Caco-2 (cell line): ENCODE measurements at regions of chr12 and their contacts with region 1.

Region 1: GRCh38 chr12:28172434-28173030 is 17.7 kb upstream of the CCDC91 start:
- DNase-seq: peak in 1 of 2 experiments; percentile 59
- H3K4me3 ChIP-seq: no peak overlapping the region
- H3K4me3 Mint-ChIP-seq: no peak overlapping the region
- H3K27ac Mint-ChIP-seq: no peak overlapping the region
- H3K4me1 ChIP-seq: no peaks in the 10 kb centered on the region
- H3K4me1 Mint-ChIP-seq: no peaks in the 10 kb centered on the region
- H3K27me3 ChIP-seq: no peaks in the 10 kb centered on the region
- H3K27me3 Mint-ChIP-seq: peaks cover 6% of the 10 kb centered on the region
- CTCF ChIP-seq: peak; percentile 62 to 84

Region 2: GRCh38 chr12:27922501-27923139 is 249.9 kb before region 1 on chr12:
- CTCF ChIA-PET with region 1: no interaction called
- POLR2A ChIA-PET with region 1: no interaction called
- intact Hi-C with region 1: no loop called
- DNase-seq: no peak
- H3K4me3 ChIP-seq: no peak overlapping the region
- H3K4me3 Mint-ChIP-seq: no peak overlapping the region
- H3K27ac Mint-ChIP-seq: no peak overlapping the region
- H3K4me1 ChIP-seq: peaks cover 11% of the 10 kb centered on the region
- H3K4me1 Mint-ChIP-seq: peaks cover 18% of the 10 kb centered on the region
- H3K27me3 ChIP-seq: no peaks in the 10 kb centered on the region
- H3K27me3 Mint-ChIP-seq: no peaks in the 10 kb centered on the region
- CTCF ChIP-seq: no peak

Region 3: GRCh38 chr12:27969624-27970400 is 202.7 kb before region 1 on chr12:
- CTCF ChIA-PET with region 1: no interaction called
- POLR2A ChIA-PET with region 1: no interaction called
- intact Hi-C with region 1: loop called (anchors 1 kb)
- DNase-seq: peak; percentile 82 to 86
- H3K4me3 ChIP-seq: peak overlapping the region; percentile 51
- H3K4me3 Mint-ChIP-seq: peak overlapping the region; percentile 78
- H3K27ac Mint-ChIP-seq: no peak overlapping the region
- H3K4me1 ChIP-seq: peaks cover 31% of the 10 kb centered on the region
- H3K4me1 Mint-ChIP-seq: peaks cover 32% of the 10 kb centered on the region
- H3K27me3 ChIP-seq: peaks cover 3% of the 10 kb centered on the region; the same call in 1 of the 2 replicates
- H3K27me3 Mint-ChIP-seq: peaks cover 31% of the 10 kb centered on the region
- CTCF ChIP-seq: peak in 1 of 2 experiments; percentile 50

Region 4: GRCh38 chr12:28040246-28040645 is 132.3 kb before region 1 on chr12:
- CTCF ChIA-PET with region 1: no interaction called
- POLR2A ChIA-PET with region 1: no interaction called
- intact Hi-C with region 1: no loop called
- DNase-seq: no peak
- H3K4me3 ChIP-seq: no peak overlapping the region
- H3K4me3 Mint-ChIP-seq: no peak overlapping the region
- H3K27ac Mint-ChIP-seq: no peak overlapping the region
- H3K4me1 ChIP-seq: no peaks in the 10 kb centered on the region
- H3K4me1 Mint-ChIP-seq: no peaks in the 10 kb centered on the region
- H3K27me3 ChIP-seq: no peaks in the 10 kb centered on the region
- H3K27me3 Mint-ChIP-seq: no peaks in the 10 kb centered on the region
- CTCF ChIP-seq: no peak

Region 5: DNA sequence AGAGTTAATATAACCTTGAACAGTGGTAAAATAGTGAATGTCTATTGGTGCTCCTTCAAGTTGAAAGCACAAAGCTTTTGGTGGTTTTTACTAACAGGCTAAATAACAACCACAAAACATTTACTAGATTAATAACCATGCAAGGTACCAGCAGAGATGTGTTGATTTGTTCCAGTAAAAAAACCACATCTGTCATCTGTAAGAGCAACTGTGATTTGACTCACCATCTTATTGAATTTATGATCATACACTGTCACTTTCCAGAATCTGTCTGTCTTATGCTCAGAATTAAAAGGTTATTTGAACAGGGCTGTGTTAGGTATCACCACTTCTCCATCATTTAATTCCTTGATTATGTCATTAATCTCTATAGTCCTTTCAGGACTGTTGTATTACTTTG is 93.0 kb before region 1 on chr12:
- CTCF ChIA-PET with region 1: no interaction called
- POLR2A ChIA-PET with region 1: no interaction called
- intact Hi-C with region 1: no loop called
- DNase-seq: no peak
- H3K4me3 ChIP-seq: no peak overlapping the region
- H3K4me3 Mint-ChIP-seq: no peak overlapping the region
- H3K27ac Mint-ChIP-seq: no peak overlapping the region
- H3K4me1 ChIP-seq: no peaks in the 10 kb centered on the region
- H3K4me1 Mint-ChIP-seq: no peaks in the 10 kb centered on the region
- H3K27me3 ChIP-seq: no peaks in the 10 kb centered on the region
- H3K27me3 Mint-ChIP-seq: peaks cover 8% of the 10 kb centered on the region
- CTCF ChIP-seq: no peak

Region 6: GRCh38 chr12:28110329-28110728 is 62.2 kb before region 1 on chr12:
- CTCF ChIA-PET with region 1: interaction called, 5 read pairs
- POLR2A ChIA-PET with region 1: no interaction called
- intact Hi-C with region 1: loop called (anchors 1 kb)
- DNase-seq: peak in 1 of 2 experiments; percentile 16
- H3K4me3 ChIP-seq: no peak overlapping the region
- H3K4me3 Mint-ChIP-seq: no peak overlapping the region
- H3K27ac Mint-ChIP-seq: no peak overlapping the region
- H3K4me1 ChIP-seq: no peaks in the 10 kb centered on the region
- H3K4me1 Mint-ChIP-seq: no peaks in the 10 kb centered on the region
- H3K27me3 ChIP-seq: no peaks in the 10 kb centered on the region
- H3K27me3 Mint-ChIP-seq: peaks cover 3% of the 10 kb centered on the region
- CTCF ChIP-seq: no peak

Region 7: GRCh38 chr12:28144059-28144458 is 28.5 kb before region 1 on chr12:
- CTCF ChIA-PET with region 1: no interaction called
- POLR2A ChIA-PET with region 1: no interaction called
- intact Hi-C with region 1: no loop called
- DNase-seq: no peak
- H3K4me3 ChIP-seq: no peak overlapping the region
- H3K4me3 Mint-ChIP-seq: no peak overlapping the region
- H3K27ac Mint-ChIP-seq: no peak overlapping the region
- H3K4me1 ChIP-seq: no peaks in the 10 kb centered on the region
- H3K4me1 Mint-ChIP-seq: no peaks in the 10 kb centered on the region
- H3K27me3 ChIP-seq: no peaks in the 10 kb centered on the region
- H3K27me3 Mint-ChIP-seq: peaks cover 3% of the 10 kb centered on the region
- CTCF ChIP-seq: no peak

Region 8: GRCh38 chr12:28872654-28873268 is 700.2 kb after region 1 on chr12:
- CTCF ChIA-PET with region 1: no interaction called
- POLR2A ChIA-PET with region 1: no interaction called
- intact Hi-C with region 1: loop called (anchors 1 kb)
- DNase-seq: peak; percentile 71 to 78
- H3K4me3 ChIP-seq: no peak overlapping the region
- H3K4me3 Mint-ChIP-seq: no peak overlapping the region
- H3K27ac Mint-ChIP-seq: no peak overlapping the region
- H3K4me1 ChIP-seq: no peaks in the 10 kb centered on the region
- H3K4me1 Mint-ChIP-seq: no peaks in the 10 kb centered on the region
- H3K27me3 ChIP-seq: no peaks in the 10 kb centered on the region
- H3K27me3 Mint-ChIP-seq: peaks cover 12% of the 10 kb centered on the region
- CTCF ChIP-seq: peak; percentile 90 to 93